ENCODE measurements at regions of chr2 and their contacts with region 1.

Region 1: GRCh38 chr2:96329416-96330269 is 4.5 kb downstream of the ITPRIPL1 start:
- DNase-seq: no peak
- H3K4me3 ChIP-seq: no peak overlapping the region
- H3K27me3 ChIP-seq: no peaks in the 10 kb centered on the region
- CTCF ChIP-seq: no peak

Region 2: GRCh38 chr2:96565111-96565510 is 235.5 kb after region 1 on chr2:
- CTCF ChIA-PET with region 1: no interaction called
- POLR2A ChIA-PET with region 1: no interaction called
- DNase-seq: no peak
- H3K4me3 ChIP-seq: no peak overlapping the region
- H3K27me3 ChIP-seq: no peaks in the 10 kb centered on the region; the same call in 1 of the 2 replicates
- CTCF ChIP-seq: no peak

Region 3: GRCh38 chr2:96900237-96900636 is 570.6 kb after region 1 on chr2:
- CTCF ChIA-PET with region 1: no interaction called
- POLR2A ChIA-PET with region 1: interaction called, 12 read pairs
- DNase-seq: no peak
- H3K4me3 ChIP-seq: no peak overlapping the region
- H3K27me3 ChIP-seq: no peaks in the 10 kb centered on the region
- CTCF ChIP-seq: no peak